Endothelial cell of umbilical vein (primary cell): ENCODE measurements at regions of chr6 and their contacts with region 1.

Region 1: GRCh38 chr6:14876778-14877613 is 368.9 kb upstream of the JARID2 start:
- DNase-seq: peak; percentile 88
- H3K4me3 ChIP-seq: no peak overlapping the region
- H3K27ac ChIP-seq: peak overlapping the region; percentile 49
- H3K4me1 ChIP-seq: peaks cover 37% of the 10 kb centered on the region
- H3K27me3 ChIP-seq: peaks cover 0 to 3% of the 10 kb centered on the region in 2 experiments
- CTCF ChIP-seq: no peak
- POLR2A ChIP-seq: no peak

Region 2: DNA sequence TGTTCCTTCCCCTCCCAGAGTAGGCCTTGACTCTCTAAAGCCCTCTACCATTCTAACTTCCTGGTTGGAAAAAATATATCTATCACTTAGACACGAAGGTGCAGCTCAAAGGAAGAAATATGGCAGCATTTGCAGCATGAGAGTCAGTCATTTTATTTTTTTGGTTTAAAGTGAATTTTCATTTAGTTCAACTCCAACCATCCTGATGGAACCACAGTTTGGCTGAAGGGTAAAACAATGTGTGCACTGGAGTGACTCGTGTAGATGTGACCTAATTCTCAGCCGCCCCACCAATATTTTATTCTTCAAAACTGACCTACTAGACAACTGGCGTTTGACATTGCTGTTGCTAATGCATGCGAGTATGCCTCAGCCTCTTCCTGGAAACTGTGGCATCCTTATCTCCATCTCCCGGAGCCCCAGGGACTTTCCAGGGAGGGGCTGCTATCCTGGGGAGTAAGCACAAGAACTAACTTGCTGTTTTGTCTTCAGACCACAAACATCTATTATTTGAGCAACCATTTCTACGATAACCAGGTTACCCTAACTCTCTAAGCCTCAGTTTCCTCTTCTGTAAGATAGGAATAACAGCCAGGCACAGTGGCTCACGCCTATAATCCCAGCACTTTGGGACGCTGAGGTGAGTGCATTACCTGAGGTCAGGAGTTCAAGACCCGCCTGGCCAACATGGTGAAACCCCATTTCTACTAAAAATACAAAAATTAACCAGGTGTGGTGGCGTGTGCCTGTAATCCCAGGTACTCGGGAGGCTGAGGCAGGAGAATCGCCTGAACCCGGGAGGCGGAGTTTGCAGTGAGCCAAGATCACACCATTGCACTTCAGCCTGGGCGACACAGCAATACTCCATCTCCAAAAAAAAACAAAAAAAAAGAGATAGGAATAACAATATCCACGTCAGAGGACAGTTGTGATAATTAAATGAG is 220.2 kb after region 1 on chr6:
- CTCF ChIA-PET with region 1: no interaction called
- POLR2A ChIA-PET with region 1: no interaction called
- dilution Hi-C with region 1: no loop called
- intact Hi-C with region 1: no loop called
- DNase-seq: no peak
- H3K4me3 ChIP-seq: no peak overlapping the region
- H3K27ac ChIP-seq: no peak overlapping the region
- H3K4me1 ChIP-seq: no peaks in the 10 kb centered on the region
- H3K27me3 ChIP-seq: no peaks in the 10 kb centered on the region
- CTCF ChIP-seq: no peak
- POLR2A ChIP-seq: no peak

Region 3: GRCh38 chr6:15441215-15441868 is 564.3 kb after region 1 on chr6:
- CTCF ChIA-PET with region 1: no interaction called
- POLR2A ChIA-PET with region 1: no interaction called
- dilution Hi-C with region 1: no loop called
- intact Hi-C with region 1: loop called (anchors 10 kb)
- DNase-seq: peak; percentile 63
- H3K4me3 ChIP-seq: no peak overlapping the region
- H3K27ac ChIP-seq: no peak overlapping the region
- H3K4me1 ChIP-seq: peaks cover 5% of the 10 kb centered on the region
- H3K27me3 ChIP-seq: no peaks in the 10 kb centered on the region
- CTCF ChIP-seq: peak; percentile 73 to 75
- POLR2A ChIP-seq: no peak

Region 4: GRCh38 chr6:15631432-15631831 is 754.4 kb after region 1 on chr6:
- CTCF ChIA-PET with region 1: no interaction called
- POLR2A ChIA-PET with region 1: no interaction called
- dilution Hi-C with region 1: no loop called
- intact Hi-C with region 1: no loop called
- DNase-seq: no peak
- H3K4me3 ChIP-seq: no peak overlapping the region
- H3K27ac ChIP-seq: no peak overlapping the region
- H3K4me1 ChIP-seq: peaks cover 11% of the 10 kb centered on the region
- H3K27me3 ChIP-seq: no peaks in the 10 kb centered on the region
- CTCF ChIP-seq: no peak
- POLR2A ChIP-seq: no peak